ENCODE measurements at regions of chr1 and their contacts with region 1.

Region 1: DNA sequence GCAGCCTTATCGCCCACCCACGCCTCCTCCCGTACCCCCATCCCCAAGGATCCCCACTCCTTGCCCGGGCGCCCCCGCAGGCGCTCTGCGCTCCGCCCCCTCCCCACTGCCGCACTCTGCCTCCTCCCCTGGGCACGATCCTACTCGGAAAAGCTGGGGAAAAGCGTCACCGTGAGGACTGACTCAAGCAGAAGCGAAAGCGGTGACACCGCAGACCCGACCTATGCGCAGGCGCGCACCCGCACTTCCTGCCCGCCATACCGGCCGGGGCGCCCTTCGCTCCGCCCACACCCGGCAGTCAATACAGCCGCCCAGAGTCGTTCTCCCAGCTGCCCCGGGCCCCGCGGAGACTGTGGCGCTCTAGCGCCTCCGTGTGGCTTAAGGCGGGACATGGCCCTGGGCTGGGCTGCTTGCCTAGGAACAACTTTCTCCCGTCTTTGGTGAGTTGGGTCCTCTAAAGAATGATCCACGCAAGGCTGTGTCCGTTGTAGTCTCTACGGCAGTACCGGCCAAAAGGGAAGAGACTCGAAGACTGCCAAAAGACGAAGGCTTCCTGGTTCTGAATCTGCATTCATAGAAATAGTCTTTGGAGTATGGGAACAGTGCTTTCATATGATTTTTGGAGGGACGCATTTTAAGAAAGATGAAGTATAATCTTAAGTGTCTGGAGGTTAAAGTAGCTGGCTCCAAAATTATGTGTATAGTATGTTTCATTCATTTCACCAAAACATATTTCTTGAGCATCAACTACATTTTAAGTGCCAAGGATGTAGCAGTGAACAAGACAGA is at the start of gene OMA1:
- DNase-seq: peak; percentile 98 to 99
- ATAC-seq: peak; percentile 98 to 99 (median 99)
- H3K4me3 ChIP-seq: peak within 1 kb of the TSS; percentile 81
- H3K27ac ChIP-seq: peak within 1 kb of the TSS; percentile 98
- H3K4me1 ChIP-seq: peaks cover 6% of the 10 kb centered on the region
- H3K27me3 ChIP-seq: no peaks in the 10 kb centered on the region
- CTCF ChIP-seq: peak; percentile 97
- total RNA-seq, gene OMA1: 16.5 to 30.4 (median 23.7) TPM

Region 2: GRCh38 chr1:58652651-58653184 is 106.0 kb after region 1 on chr1:
- intact Hi-C with region 1: loop called (anchors 10 kb)
- DNase-seq: peak in 1 of 2 donors; percentile 27
- ATAC-seq: peak; percentile 85 to 93 (median 90)
- H3K4me3 ChIP-seq: no peak overlapping the region
- H3K27ac ChIP-seq: no peak overlapping the region
- H3K4me1 ChIP-seq: no peaks in the 10 kb centered on the region
- H3K27me3 ChIP-seq: no peaks in the 10 kb centered on the region
- CTCF ChIP-seq: peak; percentile 91